Activated CD4-positive, alpha-beta memory T cell treated with anti-CD3 and anti-CD28 coated beads for 36 hours (primary cell): ENCODE measurements at regions of chr16 and their contacts with region 1.

Region 1: GRCh38 chr16:80746231-80746630 is 58.2 kb downstream of the CDYL2 start:
- DNase-seq: no peak
- H3K4me3 Mint-ChIP-seq: no peak overlapping the region
- H3K27ac Mint-ChIP-seq: no peak overlapping the region
- H3K4me1 Mint-ChIP-seq: peaks cover 35% of the 10 kb centered on the region
- H3K27me3 Mint-ChIP-seq: no peaks in the 10 kb centered on the region

Region 2: GRCh38 chr16:80671281-80671849 is 74.9 kb before region 1 on chr16:
- CTCF ChIA-PET with region 1: no interaction called
- POLR2A ChIA-PET with region 1: no interaction called
- intact Hi-C with region 1: no loop called
- DNase-seq: no peak
- H3K4me3 Mint-ChIP-seq: no peak overlapping the region
- H3K27ac Mint-ChIP-seq: no peak overlapping the region
- H3K4me1 Mint-ChIP-seq: peaks cover 35% of the 10 kb centered on the region
- H3K27me3 Mint-ChIP-seq: no peaks in the 10 kb centered on the region

Region 3: DNA sequence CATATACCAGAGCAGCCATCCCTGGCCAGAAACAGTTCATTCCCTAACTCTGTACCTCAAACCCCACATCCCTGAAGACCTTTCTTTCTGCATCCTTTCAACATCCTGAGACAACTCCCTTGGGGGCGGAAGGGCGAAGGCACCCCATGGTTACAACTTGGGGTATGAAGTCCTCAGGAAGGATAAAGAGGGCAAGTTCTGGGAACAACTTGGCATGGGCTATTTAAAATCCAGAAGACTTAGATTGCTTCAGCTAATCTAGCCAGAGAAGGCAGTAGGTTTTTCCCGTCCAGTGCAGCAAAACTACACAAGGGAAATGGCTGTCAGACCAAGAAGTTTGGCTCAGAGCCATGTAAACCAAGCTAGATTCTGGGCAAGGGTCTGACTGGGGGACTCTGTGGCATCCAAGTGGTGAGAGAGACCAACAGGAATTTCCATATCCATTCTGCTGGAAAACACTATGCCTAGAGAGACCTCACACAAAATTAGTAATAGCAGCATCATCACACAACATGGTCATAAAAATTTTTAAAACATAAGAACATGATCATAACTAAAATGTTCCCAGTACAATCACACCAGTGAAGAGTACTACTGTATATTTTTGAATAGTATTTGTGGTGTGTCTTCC is 55.0 kb before region 1 on chr16:
- CTCF ChIA-PET with region 1: no interaction called
- POLR2A ChIA-PET with region 1: no interaction called
- intact Hi-C with region 1: loop called (anchors 10 kb)
- DNase-seq: no peak
- H3K4me3 Mint-ChIP-seq: no peak overlapping the region
- H3K27ac Mint-ChIP-seq: no peak overlapping the region
- H3K4me1 Mint-ChIP-seq: peaks cover 45% of the 10 kb centered on the region
- H3K27me3 Mint-ChIP-seq: no peaks in the 10 kb centered on the region